CD4-positive, alpha-beta memory T cell (primary cell): ENCODE measurements at regions of chr12 and their contacts with region 1.

Region 1: GRCh38 chr12:24838531-24838950 is 110.4 kb downstream of the BCAT1 start:
- DNase-seq: no peak
- H3K4me3 ChIP-seq: no peak overlapping the region
- H3K4me3 Mint-ChIP-seq: peak overlapping the region in 2 of 8 donors; percentile 2 to 42
- H3K27ac ChIP-seq: no peak overlapping the region
- H3K27ac Mint-ChIP-seq: no peak overlapping the region
- H3K4me1 ChIP-seq: peaks cover 16% of the 10 kb centered on the region
- H3K4me1 Mint-ChIP-seq: peaks cover 12 to 24% (median 19%) of the 10 kb centered on the region in 4 donors
- H3K27me3 ChIP-seq: no peaks in the 10 kb centered on the region
- H3K27me3 Mint-ChIP-seq: peaks cover 7 to 9% of the 10 kb centered on the region in 2 donors

Region 2: GRCh38 chr12:22856178-22856577 is 1982.4 kb before region 1 on chr12:
- CTCF ChIA-PET with region 1: no interaction called
- POLR2A ChIA-PET with region 1: no interaction called
- intact Hi-C with region 1: loop called (anchors 5 kb)
- DNase-seq: no peak
- H3K4me3 ChIP-seq: no peak overlapping the region
- H3K4me3 Mint-ChIP-seq: no peak overlapping the region
- H3K27ac ChIP-seq: no peak overlapping the region
- H3K27ac Mint-ChIP-seq: no peak overlapping the region
- H3K4me1 ChIP-seq: no peaks in the 10 kb centered on the region
- H3K4me1 Mint-ChIP-seq: no peaks in the 10 kb centered on the region
- H3K27me3 ChIP-seq: no peaks in the 10 kb centered on the region
- H3K27me3 Mint-ChIP-seq: peaks cover 5 to 7% of the 10 kb centered on the region in 2 donors

Region 3: GRCh38 chr12:23204933-23205778 is 1633.4 kb before region 1 on chr12:
- CTCF ChIA-PET with region 1: interaction called, 31 read pairs
- POLR2A ChIA-PET with region 1: no interaction called
- intact Hi-C with region 1: no loop called
- DNase-seq: peak in 4 of 5 donors; percentile 33 to 44 (median 35)
- H3K4me3 ChIP-seq: no peak overlapping the region
- H3K4me3 Mint-ChIP-seq: no peak overlapping the region
- H3K27ac ChIP-seq: no peak overlapping the region
- H3K27ac Mint-ChIP-seq: no peak overlapping the region
- H3K4me1 ChIP-seq: no peaks in the 10 kb centered on the region
- H3K4me1 Mint-ChIP-seq: peaks cover 0 to 3% (median 0%) of the 10 kb centered on the region in 4 donors
- H3K27me3 ChIP-seq: no peaks in the 10 kb centered on the region
- H3K27me3 Mint-ChIP-seq: peaks cover 0 to 2% of the 10 kb centered on the region in 2 donors

Region 4: DNA sequence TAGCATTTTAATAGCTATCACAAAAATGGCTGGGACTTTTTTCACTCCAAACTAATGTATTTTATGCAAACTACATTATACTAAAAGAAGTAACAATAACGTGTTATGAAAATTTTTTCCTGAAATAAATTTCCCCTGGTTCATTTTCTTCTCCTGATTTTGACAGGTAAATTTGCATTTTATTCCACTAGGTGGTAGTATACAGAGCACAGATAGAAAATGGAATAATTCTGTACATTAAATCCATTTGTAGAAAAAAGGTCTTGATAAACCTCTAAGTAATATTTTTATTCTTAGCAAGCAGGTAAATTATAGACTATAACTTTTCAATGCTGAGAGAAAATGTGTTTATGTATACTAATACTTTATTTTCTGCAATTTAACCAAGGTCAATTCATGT is 13.9 kb after region 1 on chr12:
- CTCF ChIA-PET with region 1: interaction called, 14 read pairs
- POLR2A ChIA-PET with region 1: no interaction called
- intact Hi-C with region 1: no loop called
- DNase-seq: no peak
- H3K4me3 ChIP-seq: no peak overlapping the region
- H3K4me3 Mint-ChIP-seq: no peak overlapping the region
- H3K27ac ChIP-seq: no peak overlapping the region
- H3K27ac Mint-ChIP-seq: no peak overlapping the region
- H3K4me1 ChIP-seq: no peaks in the 10 kb centered on the region
- H3K4me1 Mint-ChIP-seq: no peaks in the 10 kb centered on the region
- H3K27me3 ChIP-seq: no peaks in the 10 kb centered on the region
- H3K27me3 Mint-ChIP-seq: peaks cover 1 to 4% of the 10 kb centered on the region in 2 donors